Right ventricle myocardium inferior (tissue), 1 donor: ENCODE measurements at regions of chr14 and their contacts with region 1.

Region 1: DNA sequence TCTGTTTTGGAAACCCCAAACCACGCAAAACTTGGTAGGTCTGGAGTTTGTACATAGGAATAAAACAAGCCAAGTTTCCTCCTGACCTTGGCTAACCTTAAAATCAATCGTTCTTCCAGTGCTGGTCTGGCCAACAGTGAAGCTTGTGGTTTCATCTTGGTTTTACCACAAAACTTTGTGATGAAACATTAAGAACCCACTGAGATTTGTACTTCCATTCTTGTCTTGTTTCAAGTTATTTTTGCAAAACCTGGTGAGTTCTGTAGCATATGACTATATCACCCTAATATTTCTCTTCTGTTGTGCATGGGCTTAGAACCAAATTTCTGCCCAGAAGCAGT is 26.4 kb downstream of the SIX1 start:
- DNase-seq: no peak
- ATAC-seq: no peak

Region 2: GRCh38 chr14:61025251-61026223 is 402.6 kb after region 1 on chr14:
- intact Hi-C with region 1: loop called (anchors 1 kb)
- DNase-seq: no peak
- ATAC-seq: no peak

Region 3: GRCh38 chr14:61269321-61270083 is 646.6 kb after region 1 on chr14:
- intact Hi-C with region 1: no loop called
- DNase-seq: peak; percentile 80
- ATAC-seq: peak; percentile 70